ENCODE measurements at regions of chr12 and their contacts with region 1.

Region 1: GRCh38 chr12:119444456-119445044 is 110.0 kb downstream of the CCDC60 start:
- DNase-seq: peak; percentile 24
- H3K4me3 Mint-ChIP-seq: no peak overlapping the region
- H3K27ac Mint-ChIP-seq: no peak overlapping the region
- H3K4me1 Mint-ChIP-seq: peaks cover 5% of the 10 kb centered on the region
- H3K27me3 Mint-ChIP-seq: no peaks in the 10 kb centered on the region

Region 2: GRCh38 chr12:119274636-119275065 is 169.9 kb before region 1 on chr12:
- intact Hi-C with region 1: no loop called
- DNase-seq: no peak
- H3K4me3 Mint-ChIP-seq: no peak overlapping the region
- H3K27ac Mint-ChIP-seq: no peak overlapping the region
- H3K4me1 Mint-ChIP-seq: no peaks in the 10 kb centered on the region
- H3K27me3 Mint-ChIP-seq: no peaks in the 10 kb centered on the region

Region 3: DNA sequence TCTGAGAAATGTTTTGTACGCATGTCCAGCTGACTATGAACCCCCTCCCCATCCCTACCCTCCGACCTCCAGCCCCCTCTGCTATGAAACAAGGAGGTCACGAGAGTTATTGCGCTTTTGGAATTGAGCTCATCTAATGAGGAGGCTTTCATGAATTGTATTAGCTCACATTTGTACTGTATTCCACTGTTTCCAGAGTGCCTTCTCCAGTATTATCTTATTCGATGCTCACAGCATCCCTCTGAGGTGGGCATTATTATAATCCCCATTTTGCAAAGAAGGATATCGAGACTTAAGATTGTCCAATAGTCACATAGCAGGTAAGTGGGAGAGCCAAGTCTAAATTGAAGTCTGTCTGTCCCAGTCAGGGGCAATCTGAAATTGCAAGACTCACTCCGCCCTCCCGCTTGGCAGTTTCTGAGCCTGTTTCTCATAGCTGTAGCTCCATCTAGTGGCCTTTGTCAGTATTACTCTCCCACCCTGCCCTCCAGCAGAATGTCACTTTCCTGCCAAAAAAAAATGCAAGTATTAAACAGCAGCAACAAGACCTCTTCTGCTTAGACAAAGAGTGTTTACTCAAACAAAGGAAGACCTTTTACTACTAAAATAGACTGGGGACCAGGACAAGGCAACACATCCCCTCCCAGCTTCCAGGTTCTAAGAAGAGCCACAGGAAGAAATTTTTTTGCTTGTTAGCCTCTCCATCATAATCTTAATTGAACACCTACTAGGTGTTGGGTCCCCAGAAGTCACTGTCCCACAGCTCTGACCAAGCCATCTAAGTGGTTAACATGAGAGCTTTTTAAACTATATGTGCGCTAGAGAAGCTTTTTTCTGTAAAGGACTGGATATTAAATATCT is 100.4 kb after region 1 on chr12:
- intact Hi-C with region 1: loop called (anchors 1 kb)
- DNase-seq: peak; percentile 33
- H3K4me3 Mint-ChIP-seq: no peak overlapping the region
- H3K27ac Mint-ChIP-seq: no peak overlapping the region
- H3K4me1 Mint-ChIP-seq: no peaks in the 10 kb centered on the region
- H3K27me3 Mint-ChIP-seq: peaks cover 4% of the 10 kb centered on the region

Region 4: GRCh38 chr12:119649202-119649808 is 204.8 kb after region 1 on chr12:
- intact Hi-C with region 1: loop called (anchors 2 kb)
- DNase-seq: no peak
- H3K4me3 Mint-ChIP-seq: no peak overlapping the region
- H3K27ac Mint-ChIP-seq: no peak overlapping the region
- H3K4me1 Mint-ChIP-seq: peaks cover 4% of the 10 kb centered on the region
- H3K27me3 Mint-ChIP-seq: peaks cover 7% of the 10 kb centered on the region

Measured in activated T-helper 2 cell treated with anti-CD3 and anti-CD28 coated beads, Interferon-gamma antibody, Interleukin-2, Interleukin-4, amounts not matched to agents 10 μg/mL and 5 μg/mL and 100 μg/mL, durations not matched to agents 14 hours and 24 hours and 36 hours (primary cell).